ENCODE measurements at regions of chr19 and their contacts with region 1.

Region 1: GRCh38 chr19:49224856-49225255 is 67.3 kb downstream of the TRPM4 start:
- DNase-seq: peak in 4 of 35 experiments; percentile 15 to 27 (median 16)
- ATAC-seq: peak in 1 of 4 experiments; percentile 34
- H3K4me3 ChIP-seq: no peak overlapping the region
- H3K4me3 Mint-ChIP-seq: no peak overlapping the region
- H3K27ac ChIP-seq: no peak overlapping the region
- H3K27ac Mint-ChIP-seq: no peak overlapping the region
- H3K4me1 ChIP-seq: peaks cover 0 to 7% of the 10 kb centered on the region in 2 experiments
- H3K4me1 Mint-ChIP-seq: peaks cover 5 to 9% (median 5%) of the 10 kb centered on the region in 3 donors
- H3K27me3 ChIP-seq: peaks cover 0 to 33% of the 10 kb centered on the region in 2 experiments
- H3K27me3 Mint-ChIP-seq: peaks cover 7 to 11% of the 10 kb centered on the region in 2 donors

Region 2: DNA sequence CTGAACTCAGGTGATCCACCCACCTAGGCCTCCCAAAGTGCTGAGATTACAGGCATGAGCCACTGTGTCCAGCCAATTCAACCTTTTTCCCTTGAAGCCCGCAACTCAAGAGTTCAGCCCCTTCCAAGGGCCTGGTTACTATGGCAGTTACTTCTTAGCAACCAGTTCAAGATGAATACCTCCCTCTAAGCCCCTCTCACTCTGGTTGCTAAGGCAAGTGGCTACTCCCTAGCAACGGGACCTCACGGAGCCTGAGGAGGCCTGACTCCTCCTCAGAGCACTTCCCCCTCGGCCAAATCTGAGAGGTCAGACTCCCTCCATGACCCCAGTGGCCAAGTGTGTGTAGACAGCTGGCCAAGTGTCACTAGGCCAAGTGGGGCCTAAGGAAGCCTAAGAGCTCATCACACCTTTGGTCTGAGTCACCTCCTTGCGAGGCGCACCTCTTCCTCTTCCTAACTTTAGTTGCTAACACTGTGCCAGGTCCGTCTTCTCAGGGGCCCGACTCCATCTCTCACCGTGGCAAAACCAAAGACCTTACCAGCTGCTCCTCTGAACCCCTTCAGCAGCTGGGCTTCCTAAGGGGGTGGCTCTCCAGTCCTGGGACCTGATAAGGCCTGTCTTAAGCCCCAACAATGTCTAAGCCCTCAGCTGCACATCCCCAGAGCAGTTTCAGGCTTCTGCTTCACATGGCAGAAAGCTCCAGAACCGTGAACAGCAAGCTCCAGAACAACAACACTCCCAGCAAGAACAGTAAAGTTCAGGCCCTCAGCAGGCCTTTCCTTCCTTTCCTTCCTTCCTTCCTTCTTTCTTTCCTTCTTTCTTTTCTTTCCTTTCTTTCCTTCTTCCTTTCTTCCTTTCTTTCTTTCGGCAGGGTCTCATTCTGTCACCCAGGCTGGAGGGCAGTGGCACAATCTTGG is 119.9 kb after region 1 on chr19:
- CTCF ChIA-PET with region 1: no interaction called
- POLR2A ChIA-PET with region 1: interaction called in 1 of 2 experiments, 14 read pairs
- DNase-seq: no peak
- ATAC-seq: peak in 1 of 4 experiments; percentile 46
- H3K4me3 ChIP-seq: no peak overlapping the region
- H3K4me3 Mint-ChIP-seq: no peak overlapping the region
- H3K27ac ChIP-seq: no peak overlapping the region
- H3K27ac Mint-ChIP-seq: peak overlapping the region; percentile 50
- H3K4me1 ChIP-seq: peaks cover 0 to 12% of the 10 kb centered on the region in 2 experiments
- H3K4me1 Mint-ChIP-seq: peaks cover 13 to 22% (median 20%) of the 10 kb centered on the region in 3 donors
- H3K27me3 ChIP-seq: peaks cover 0 to 2% of the 10 kb centered on the region in 2 experiments
- H3K27me3 Mint-ChIP-seq: no peaks in the 10 kb centered on the region

Measured in T-cell (primary cell).